MCF 10A (cell line): ENCODE measurements at regions of chr17 and their contacts with region 1.

Region 1: GRCh38 chr17:50865984-50866774 is at the start of gene TOB1:
- DNase-seq: peak; percentile 99
- H3K4me3 Mint-ChIP-seq: peak within 1 kb of the TSS; percentile 73
- H3K27ac Mint-ChIP-seq: peak within 1 kb of the TSS; percentile 93
- H3K4me1 Mint-ChIP-seq: peaks cover 20% of the 10 kb centered on the region
- H3K27me3 Mint-ChIP-seq: no peaks in the 10 kb centered on the region
- CTCF ChIP-seq: no peak
- total RNA-seq, gene TOB1: 53.1 and 66.0 TPM in 2 replicates

Region 2: GRCh38 chr17:49290690-49291359 is 1575.4 kb before region 1 on chr17:
- CTCF ChIA-PET with region 1: no interaction called
- POLR2A ChIA-PET with region 1: no interaction called
- intact Hi-C with region 1: no loop called
- DNase-seq: peak; percentile 47
- H3K4me3 Mint-ChIP-seq: no peak overlapping the region
- H3K27ac Mint-ChIP-seq: no peak overlapping the region
- H3K4me1 Mint-ChIP-seq: no peaks in the 10 kb centered on the region
- H3K27me3 Mint-ChIP-seq: no peaks in the 10 kb centered on the region
- CTCF ChIP-seq: peak; percentile 49

Region 3: GRCh38 chr17:50406578-50406977 is 459.6 kb before region 1 on chr17:
- CTCF ChIA-PET with region 1: no interaction called
- POLR2A ChIA-PET with region 1: no interaction called
- intact Hi-C with region 1: no loop called
- DNase-seq: no peak
- H3K4me3 Mint-ChIP-seq: no peak overlapping the region
- H3K27ac Mint-ChIP-seq: no peak overlapping the region
- H3K4me1 Mint-ChIP-seq: no peaks in the 10 kb centered on the region
- H3K27me3 Mint-ChIP-seq: peaks cover 28% of the 10 kb centered on the region
- CTCF ChIP-seq: no peak

Region 4: GRCh38 chr17:50798424-50799288 is 67.5 kb before region 1 on chr17:
- CTCF ChIA-PET with region 1: no interaction called
- POLR2A ChIA-PET with region 1: interaction called, 14 read pairs
- intact Hi-C with region 1: no loop called
- DNase-seq: peak; percentile 86
- H3K4me3 Mint-ChIP-seq: no peak overlapping the region
- H3K27ac Mint-ChIP-seq: peak overlapping the region; percentile 82
- H3K4me1 Mint-ChIP-seq: peaks cover 11% of the 10 kb centered on the region
- H3K27me3 Mint-ChIP-seq: no peaks in the 10 kb centered on the region
- CTCF ChIP-seq: no peak

Region 5: DNA sequence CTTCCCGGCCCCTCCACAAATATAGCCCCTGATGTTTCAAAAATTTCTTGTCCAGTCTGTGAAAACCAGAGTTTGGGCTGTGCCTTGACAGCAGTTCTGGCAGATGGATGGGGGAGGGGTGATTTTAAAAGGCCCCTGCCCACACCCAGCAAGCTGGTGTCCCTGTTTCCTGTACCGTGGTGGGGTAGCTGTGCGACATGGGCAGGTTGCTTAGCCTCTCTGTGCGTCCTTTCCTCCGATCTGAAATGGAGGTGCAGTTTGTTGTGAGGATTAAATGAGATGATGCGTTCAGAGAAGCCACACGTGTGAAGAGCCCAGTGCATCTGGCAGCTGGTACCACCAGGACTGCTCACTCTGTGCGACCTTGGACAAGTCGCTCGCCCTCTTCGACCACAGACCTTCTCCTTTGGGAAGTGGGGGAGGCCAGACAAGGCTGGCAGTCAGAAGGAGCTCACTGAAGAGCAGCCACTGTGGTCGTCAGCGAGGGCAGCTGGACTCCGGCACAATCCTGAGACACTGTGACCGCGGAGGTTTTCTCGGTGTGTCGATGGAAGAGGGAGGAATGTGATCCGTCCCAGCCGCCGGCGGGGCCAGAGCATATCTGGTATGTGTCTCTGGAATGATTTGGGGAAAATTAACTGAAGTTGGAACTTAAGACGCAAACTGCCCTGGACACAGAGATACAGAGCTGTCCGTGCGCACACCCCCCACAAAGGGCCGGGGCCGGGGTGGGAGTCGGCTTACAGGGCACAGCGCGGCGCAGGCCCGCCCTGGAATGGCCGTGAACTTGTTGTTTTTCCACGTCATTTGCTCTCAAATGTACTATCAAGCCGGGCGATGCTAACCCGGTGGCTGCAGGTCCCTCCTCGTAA is 31.5 kb before region 1 on chr17:
- CTCF ChIA-PET with region 1: no interaction called
- POLR2A ChIA-PET with region 1: no interaction called
- intact Hi-C with region 1: no loop called
- DNase-seq: no peak
- H3K4me3 Mint-ChIP-seq: no peak overlapping the region
- H3K27ac Mint-ChIP-seq: no peak overlapping the region
- H3K4me1 Mint-ChIP-seq: no peaks in the 10 kb centered on the region
- H3K27me3 Mint-ChIP-seq: no peaks in the 10 kb centered on the region
- CTCF ChIP-seq: no peak

Region 6: GRCh38 chr17:50893183-50893993 is 27.2 kb after region 1 on chr17:
- CTCF ChIA-PET with region 1: interaction called, 8 read pairs
- POLR2A ChIA-PET with region 1: interaction called, 139 read pairs
- intact Hi-C with region 1: no loop called
- DNase-seq: peak; percentile 35
- H3K4me3 Mint-ChIP-seq: peak overlapping the region; percentile 6
- H3K27ac Mint-ChIP-seq: peak overlapping the region; percentile 84
- H3K4me1 Mint-ChIP-seq: peaks cover 29% of the 10 kb centered on the region
- H3K27me3 Mint-ChIP-seq: no peaks in the 10 kb centered on the region
- CTCF ChIP-seq: no peak

Region 7: GRCh38 chr17:50919321-50920085 is 53.3 kb after region 1 on chr17:
- CTCF ChIA-PET with region 1: interaction called, 3 read pairs
- POLR2A ChIA-PET with region 1: interaction called, 12 read pairs
- intact Hi-C with region 1: no loop called
- DNase-seq: peak; percentile 72
- H3K4me3 Mint-ChIP-seq: no peak overlapping the region
- H3K27ac Mint-ChIP-seq: no peak overlapping the region
- H3K4me1 Mint-ChIP-seq: peaks cover 21% of the 10 kb centered on the region
- H3K27me3 Mint-ChIP-seq: no peaks in the 10 kb centered on the region
- CTCF ChIP-seq: no peak

Region 8: DNA sequence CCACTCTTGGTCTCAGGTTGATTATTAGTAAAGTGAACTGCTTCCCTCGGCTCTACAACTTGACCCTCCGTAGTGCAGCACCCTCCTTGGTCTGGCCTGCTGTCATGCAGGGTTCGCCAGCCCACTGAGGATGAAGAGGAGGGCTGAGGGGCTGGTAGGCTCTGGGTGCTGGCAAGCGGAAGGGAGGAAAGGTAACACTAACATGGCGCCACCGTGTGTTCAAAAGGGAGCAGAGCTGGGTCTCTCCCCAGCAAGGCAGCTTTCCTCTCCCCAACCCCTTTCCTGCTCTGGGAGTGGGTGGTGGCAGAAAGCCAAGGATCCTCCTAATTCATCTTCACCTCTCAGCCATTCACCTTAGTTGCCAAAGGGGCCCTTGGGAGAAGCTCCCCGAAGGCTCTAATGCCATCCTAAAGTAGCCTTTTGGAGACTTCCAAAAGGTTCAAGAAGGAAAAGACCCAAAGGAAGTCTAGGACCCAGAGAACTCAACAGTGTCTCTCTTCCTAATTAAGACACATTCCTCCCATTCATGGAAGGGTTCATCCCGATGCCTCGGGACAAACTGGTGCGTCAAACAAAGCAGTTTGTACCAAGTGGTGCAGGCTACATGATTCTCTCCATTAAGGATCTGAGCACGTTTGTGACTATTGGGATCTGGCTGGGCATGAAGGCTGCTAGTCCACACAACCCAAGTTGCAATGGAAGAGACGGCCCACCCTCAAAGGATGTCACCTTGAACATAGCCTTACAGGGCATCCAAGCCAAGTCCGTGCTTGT is 90.8 kb after region 1 on chr17:
- CTCF ChIA-PET with region 1: interaction called, 15 read pairs
- POLR2A ChIA-PET with region 1: interaction called, 473 read pairs
- intact Hi-C with region 1: loop called (anchors 1 kb)
- DNase-seq: peak; percentile 72
- H3K4me3 Mint-ChIP-seq: no peak overlapping the region
- H3K27ac Mint-ChIP-seq: no peak overlapping the region
- H3K4me1 Mint-ChIP-seq: peaks cover 32% of the 10 kb centered on the region
- H3K27me3 Mint-ChIP-seq: no peaks in the 10 kb centered on the region
- CTCF ChIP-seq: peak; percentile 64

Region 9: GRCh38 chr17:51203838-51204237 is 337.7 kb after region 1 on chr17:
- CTCF ChIA-PET with region 1: no interaction called
- POLR2A ChIA-PET with region 1: no interaction called
- intact Hi-C with region 1: no loop called
- DNase-seq: no peak
- H3K4me3 Mint-ChIP-seq: no peak overlapping the region
- H3K27ac Mint-ChIP-seq: no peak overlapping the region
- H3K4me1 Mint-ChIP-seq: no peaks in the 10 kb centered on the region
- H3K27me3 Mint-ChIP-seq: no peaks in the 10 kb centered on the region
- CTCF ChIP-seq: no peak